Naive thymus-derived CD4-positive, alpha-beta T cell (primary cell): ENCODE measurements at regions of chr10 and their contacts with region 1.

Region 1: GRCh38 chr10:100185364-100186252 is at the start of gene ERLIN1:
- DNase-seq: peak; percentile 86 to 97 (median 91)
- ATAC-seq: peak; percentile 96
- H3K4me3 ChIP-seq: peak within 1 kb of the TSS; percentile 96
- H3K4me3 Mint-ChIP-seq: peak within 1 kb of the TSS; percentile 93 to 100 (median 96)
- H3K27ac ChIP-seq: peak within 1 kb of the TSS; percentile 84
- H3K27ac Mint-ChIP-seq: peak within 1 kb of the TSS; percentile 89 to 97 (median 95)
- H3K4me1 ChIP-seq: peaks cover 15 to 17% of the 10 kb centered on the region in 2 donors
- H3K4me1 Mint-ChIP-seq: peaks cover 40 to 79% (median 62%) of the 10 kb centered on the region in 7 donors
- H3K27me3 ChIP-seq: no peaks in the 10 kb centered on the region
- H3K27me3 Mint-ChIP-seq: no peaks in the 10 kb centered on the region
- total RNA-seq, gene ERLIN1: 3.9 to 17.0 (median 12.4) TPM

Region 2: DNA sequence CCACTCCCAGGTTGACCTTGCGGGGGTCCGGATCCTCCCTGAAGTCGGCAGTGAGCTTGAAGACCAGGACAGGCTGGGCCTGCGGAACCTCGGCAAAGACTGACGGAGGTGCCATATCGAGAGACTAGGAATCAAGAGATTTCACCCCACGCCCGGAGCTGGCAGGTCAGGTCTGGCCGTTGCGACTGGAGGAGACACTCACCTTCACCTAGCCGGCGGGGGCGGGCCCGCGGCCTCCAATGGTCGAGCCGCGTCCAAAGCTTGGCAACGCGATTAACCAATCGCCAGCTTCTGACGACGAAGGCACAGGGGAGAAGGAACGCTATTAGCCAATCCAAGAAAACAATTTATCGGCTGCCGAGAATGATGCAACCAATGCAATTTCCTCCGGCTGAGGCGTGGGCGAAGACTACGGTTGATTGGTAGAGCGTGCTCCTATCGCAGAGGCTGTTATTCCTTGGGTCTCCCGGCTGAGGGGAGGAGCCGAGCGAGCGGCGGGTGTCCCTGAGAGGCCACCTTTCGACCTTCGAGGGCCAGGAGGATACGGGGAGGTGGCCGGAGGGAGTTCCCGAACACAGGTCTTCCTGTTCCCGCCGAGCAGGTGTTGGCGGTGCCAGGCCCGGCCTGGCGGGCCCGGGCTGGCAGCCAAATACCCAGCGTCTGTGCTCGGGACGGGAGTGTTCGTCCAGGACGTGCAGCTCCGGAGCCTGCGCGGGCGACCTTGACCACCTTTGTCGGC is 755.0 kb before region 1 on chr10 and contains the start of gene GOT1:
- CTCF ChIA-PET with region 1: no interaction called
- POLR2A ChIA-PET with region 1: no interaction called
- intact Hi-C with region 1: loop called in 1 of 2 experiments (anchors 2 kb)
- DNase-seq: peak; percentile 72 to 95 (median 94)
- ATAC-seq: peak; percentile 97
- H3K4me3 ChIP-seq: peak within 1 kb of the TSS; percentile 81
- H3K4me3 Mint-ChIP-seq: peak within 1 kb of the TSS; percentile 94 to 100 (median 98)
- H3K27ac ChIP-seq: peak within 1 kb of the TSS; percentile 90
- H3K27ac Mint-ChIP-seq: peak within 1 kb of the TSS; percentile 88 to 97 (median 94)
- H3K4me1 ChIP-seq: peaks cover 5 to 9% of the 10 kb centered on the region in 2 donors
- H3K4me1 Mint-ChIP-seq: peaks cover 19 to 53% (median 44%) of the 10 kb centered on the region in 7 donors
- H3K27me3 ChIP-seq: no peaks in the 10 kb centered on the region
- H3K27me3 Mint-ChIP-seq: no peaks in the 10 kb centered on the region
- total RNA-seq, gene GOT1: 8.0 to 22.2 (median 10.2) TPM

Region 3: GRCh38 chr10:99732033-99732912 is 453.3 kb before region 1 on chr10 and contains the starts of genes COX15 and CUTC:
- CTCF ChIA-PET with region 1: no interaction called
- POLR2A ChIA-PET with region 1: no interaction called
- intact Hi-C with region 1: loop called in 1 of 2 experiments (anchors 5 kb)
- DNase-seq: peak; percentile 89 to 95 (median 94)
- ATAC-seq: peak; percentile 95
- H3K4me3 ChIP-seq: peak within 1 kb of the TSS; percentile 94
- H3K4me3 Mint-ChIP-seq: peak within 1 kb of the TSS; percentile 95 to 100 (median 98)
- H3K27ac ChIP-seq: peak within 1 kb of the TSS; percentile 83
- H3K27ac Mint-ChIP-seq: peak within 1 kb of the TSS; percentile 98 to 100 (median 99)
- H3K4me1 ChIP-seq: peaks cover 11 to 19% of the 10 kb centered on the region in 2 donors
- H3K4me1 Mint-ChIP-seq: peaks cover 28 to 79% (median 52%) of the 10 kb centered on the region in 7 donors
- H3K27me3 ChIP-seq: no peaks in the 10 kb centered on the region
- H3K27me3 Mint-ChIP-seq: no peaks in the 10 kb centered on the region
- total RNA-seq, gene COX15: 17.6 to 43.5 (median 32.9) TPM
- total RNA-seq, gene CUTC: 19.3 to 37.1 (median 25.0) TPM

Region 4: GRCh38 chr10:100009793-100010676 is 175.6 kb before region 1 on chr10 and contains the start of gene DNMBP:
- CTCF ChIA-PET with region 1: no interaction called
- POLR2A ChIA-PET with region 1: no interaction called
- intact Hi-C with region 1: loop called in 1 of 2 experiments (anchors 10 kb)
- DNase-seq: peak; percentile 61 to 87 (median 79)
- ATAC-seq: peak; percentile 95
- H3K4me3 ChIP-seq: peak within 1 kb of the TSS; percentile 69
- H3K4me3 Mint-ChIP-seq: peak within 1 kb of the TSS; percentile 85 to 98 (median 96)
- H3K27ac ChIP-seq: peak within 1 kb of the TSS; percentile 50
- H3K27ac Mint-ChIP-seq: peak within 1 kb of the TSS; percentile 40 to 96 (median 82)
- H3K4me1 ChIP-seq: peaks cover 10 to 12% of the 10 kb centered on the region in 2 donors
- H3K4me1 Mint-ChIP-seq: peaks cover 8 to 51% (median 40%) of the 10 kb centered on the region in 7 donors
- H3K27me3 ChIP-seq: no peaks in the 10 kb centered on the region
- H3K27me3 Mint-ChIP-seq: peaks cover 0 to 35% (median 0%) of the 10 kb centered on the region in 5 donors
- total RNA-seq, gene DNMBP: 2.8 to 8.5 (median 4.4) TPM

Region 5: GRCh38 chr10:100229819-100230422 is 44.3 kb after region 1 on chr10:
- CTCF ChIA-PET with region 1: no interaction called
- POLR2A ChIA-PET with region 1: interaction called, 4 read pairs
- intact Hi-C with region 1: loop called (anchors 1 kb)
- DNase-seq: no peak
- ATAC-seq: no peak
- H3K4me3 ChIP-seq: peak overlapping the region; percentile 99
- H3K4me3 Mint-ChIP-seq: peak overlapping the region; percentile 85 to 98 (median 91)
- H3K27ac ChIP-seq: peak overlapping the region; percentile 83
- H3K27ac Mint-ChIP-seq: peak overlapping the region; percentile 75 to 97 (median 85)
- H3K4me1 ChIP-seq: peaks cover 0 to 8% of the 10 kb centered on the region in 2 donors
- H3K4me1 Mint-ChIP-seq: peaks cover 16 to 44% (median 36%) of the 10 kb centered on the region in 7 donors
- H3K27me3 ChIP-seq: no peaks in the 10 kb centered on the region
- H3K27me3 Mint-ChIP-seq: no peaks in the 10 kb centered on the region

Region 6: DNA sequence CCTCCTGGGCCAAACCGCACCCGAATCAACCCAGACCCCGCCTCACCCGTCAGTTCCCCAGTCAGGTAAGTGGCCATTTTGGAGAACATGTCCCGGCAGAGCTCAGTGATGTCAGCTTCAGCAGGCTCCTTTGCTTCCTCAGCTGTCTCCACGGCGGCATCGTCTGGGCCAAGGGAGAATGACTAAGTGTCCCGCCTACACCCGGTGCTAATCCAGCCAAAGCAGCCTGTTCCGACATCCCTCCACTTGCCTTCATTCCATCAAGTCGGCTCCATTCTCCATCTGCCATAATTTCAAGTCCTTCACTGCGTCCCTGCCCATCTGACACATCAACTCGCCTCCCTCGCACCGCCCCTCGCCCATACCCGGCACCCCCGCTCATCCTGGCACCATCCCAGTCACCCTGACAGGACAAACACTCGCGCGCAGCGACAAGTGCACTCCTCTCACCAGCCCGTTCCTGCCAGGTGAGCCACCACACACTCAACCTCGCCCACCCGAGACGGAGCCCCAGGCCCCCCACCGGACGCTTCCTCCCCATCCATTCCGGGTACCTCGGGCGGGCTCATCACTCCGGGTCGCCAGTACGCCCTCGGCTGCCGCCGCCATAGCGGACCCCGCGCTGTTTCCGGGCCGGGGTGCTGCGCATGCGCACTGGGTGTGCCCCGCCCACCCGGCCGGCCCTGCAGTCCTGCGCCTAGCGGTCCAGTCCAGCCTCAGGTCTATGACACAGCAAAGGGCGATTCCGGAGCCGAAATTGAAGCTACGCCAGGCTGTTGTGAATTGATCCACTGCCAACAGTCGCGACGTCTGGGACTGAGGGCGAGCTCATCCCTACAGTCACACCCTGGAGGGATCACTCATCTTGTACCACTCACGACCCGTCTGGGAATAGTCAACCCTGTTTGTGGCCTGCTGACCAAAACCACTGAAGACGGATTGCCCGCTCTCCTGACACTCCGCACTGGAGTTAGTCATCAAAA is 100.7 kb after region 1 on chr10 and contains the start of gene BLOC1S2:
- CTCF ChIA-PET with region 1: no interaction called
- POLR2A ChIA-PET with region 1: no interaction called
- intact Hi-C with region 1: loop called (anchors 1 kb)
- DNase-seq: peak; percentile 71 to 97 (median 86)
- ATAC-seq: peak; percentile 92
- H3K4me3 ChIP-seq: peak within 1 kb of the TSS; percentile 99
- H3K4me3 Mint-ChIP-seq: peak within 1 kb of the TSS; percentile 95 to 100 (median 100)
- H3K27ac ChIP-seq: peak within 1 kb of the TSS; percentile 86
- H3K27ac Mint-ChIP-seq: peak within 1 kb of the TSS; percentile 94 to 100 (median 99)
- H3K4me1 ChIP-seq: peaks cover 10 to 17% of the 10 kb centered on the region in 2 donors
- H3K4me1 Mint-ChIP-seq: peaks cover 14 to 32% (median 26%) of the 10 kb centered on the region in 7 donors
- H3K27me3 ChIP-seq: no peaks in the 10 kb centered on the region
- H3K27me3 Mint-ChIP-seq: no peaks in the 10 kb centered on the region
- total RNA-seq, gene BLOC1S2: 31.5 to 51.3 (median 39.9) TPM

Region 7: DNA sequence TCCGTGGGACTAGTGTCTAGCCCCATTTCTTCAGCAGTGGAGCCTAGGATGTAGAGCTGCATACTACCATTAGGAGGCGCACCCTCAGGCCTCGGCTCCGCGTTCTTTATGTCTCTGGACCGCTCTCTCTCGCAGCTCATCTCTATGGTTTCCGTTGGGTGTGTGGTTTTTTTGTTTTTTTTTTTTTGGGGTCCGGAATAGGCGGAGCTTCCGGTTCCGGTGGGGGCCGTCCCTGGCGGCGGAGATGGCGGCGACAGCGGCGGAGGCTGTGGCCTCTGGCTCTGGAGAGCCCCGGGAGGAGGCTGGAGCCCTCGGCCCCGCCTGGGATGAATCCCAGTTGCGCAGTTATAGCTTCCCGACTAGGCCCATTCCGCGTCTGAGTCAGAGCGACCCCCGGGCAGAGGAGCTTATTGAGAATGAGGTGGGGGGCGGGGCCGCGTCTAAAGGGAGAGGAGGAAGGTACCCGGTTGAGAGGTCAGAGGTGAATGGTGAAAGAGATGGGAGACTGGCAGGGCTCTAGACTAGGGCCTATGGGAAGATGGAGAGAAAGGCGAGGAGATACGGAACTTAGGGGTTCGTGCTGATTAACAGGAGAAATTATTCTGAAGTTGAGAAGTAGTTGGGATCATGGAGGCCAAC is 350.2 kb after region 1 on chr10 and contains the start of gene HIF1AN:
- CTCF ChIA-PET with region 1: no interaction called
- POLR2A ChIA-PET with region 1: no interaction called
- intact Hi-C with region 1: loop called in 1 of 2 experiments (anchors 1 kb)
- DNase-seq: peak; percentile 70 to 95 (median 91)
- ATAC-seq: peak; percentile 100
- H3K4me3 ChIP-seq: peak within 1 kb of the TSS; percentile 73
- H3K4me3 Mint-ChIP-seq: peak within 1 kb of the TSS in 1 of 10 donors; percentile 9
- H3K27ac ChIP-seq: peak within 1 kb of the TSS; percentile 85
- H3K27ac Mint-ChIP-seq: peak within 1 kb of the TSS in 1 of 9 donors; percentile 57
- H3K4me1 ChIP-seq: peaks cover 24 to 27% of the 10 kb centered on the region in 2 donors
- H3K4me1 Mint-ChIP-seq: peaks cover 0 to 29% (median 10%) of the 10 kb centered on the region in 7 donors
- H3K27me3 ChIP-seq: no peaks in the 10 kb centered on the region
- H3K27me3 Mint-ChIP-seq: no peaks in the 10 kb centered on the region
- total RNA-seq, gene HIF1AN: 43.3 to 74.9 (median 54.8) TPM

Region 8: DNA sequence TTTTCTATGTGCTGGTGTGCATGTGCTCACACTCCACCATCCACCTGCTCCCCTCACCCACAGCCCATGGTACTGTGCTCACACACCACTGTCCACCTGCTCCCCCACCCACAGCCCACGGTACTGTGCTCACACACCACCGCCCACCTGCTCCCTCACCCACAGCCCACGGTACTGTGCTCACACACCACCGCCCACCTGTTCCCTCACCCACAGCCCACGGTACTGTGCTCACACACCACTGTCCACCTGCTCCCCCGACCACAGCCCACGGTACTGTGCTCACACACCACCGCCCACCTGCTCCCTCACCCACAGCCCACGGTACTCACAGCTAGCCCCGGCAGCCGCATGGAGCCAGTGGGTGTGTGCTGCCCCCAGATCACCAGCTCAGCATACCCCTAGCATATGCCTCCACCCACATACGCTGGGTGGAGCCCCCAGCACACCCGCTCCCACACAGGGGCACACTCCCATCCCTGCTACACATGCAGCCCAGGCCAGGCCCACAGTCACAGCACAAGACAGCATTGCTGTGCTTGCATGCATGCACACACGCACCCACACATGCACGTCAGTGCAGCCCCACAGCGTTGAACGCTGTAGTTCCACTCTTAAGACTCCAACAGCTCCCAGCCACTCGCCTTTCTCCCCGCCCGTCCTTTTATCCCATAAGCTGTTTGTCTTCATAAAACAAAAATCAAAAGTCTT is 621.8 kb after region 1 on chr10:
- CTCF ChIA-PET with region 1: no interaction called
- POLR2A ChIA-PET with region 1: no interaction called
- intact Hi-C with region 1: no loop called
- DNase-seq: no peak
- ATAC-seq: no peak
- H3K4me3 ChIP-seq: no peak overlapping the region
- H3K4me3 Mint-ChIP-seq: no peak overlapping the region
- H3K27ac ChIP-seq: no peak overlapping the region
- H3K27ac Mint-ChIP-seq: no peak overlapping the region
- H3K4me1 ChIP-seq: no peaks in the 10 kb centered on the region
- H3K4me1 Mint-ChIP-seq: no peaks in the 10 kb centered on the region
- H3K27me3 ChIP-seq: no peaks in the 10 kb centered on the region
- H3K27me3 Mint-ChIP-seq: peaks cover 44 to 77% (median 75%) of the 10 kb centered on the region in 5 donors

Region 9: DNA sequence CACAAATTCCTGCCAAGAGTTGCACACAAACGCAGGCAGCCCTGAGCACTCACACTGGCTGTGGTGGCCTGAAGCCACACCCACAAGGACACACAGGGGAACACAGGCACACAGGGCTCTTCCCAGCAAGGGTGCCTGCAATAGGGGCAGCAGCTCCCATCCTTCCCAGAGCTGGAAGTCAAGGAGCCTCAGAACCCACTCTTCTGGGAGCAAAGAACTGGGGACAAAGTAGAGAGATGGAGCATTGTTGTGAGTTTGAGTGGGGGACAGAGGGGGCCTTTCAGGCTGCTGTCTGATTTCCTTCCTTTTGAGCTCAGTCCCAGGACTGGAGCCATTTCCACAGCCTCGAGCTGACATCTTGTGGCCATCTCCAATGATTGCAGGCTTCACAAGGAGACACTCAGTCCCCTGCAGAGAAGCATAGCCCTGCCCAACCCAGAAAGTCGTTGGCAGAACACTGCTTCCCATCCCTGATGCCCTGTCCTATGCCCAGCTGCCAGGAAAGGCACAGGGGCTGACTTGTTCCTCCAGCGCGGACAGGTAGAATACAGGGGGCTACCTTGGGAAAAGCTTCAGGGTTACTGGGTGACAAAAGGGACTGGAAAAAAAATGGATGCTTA is 692.8 kb after region 1 on chr10:
- CTCF ChIA-PET with region 1: no interaction called
- POLR2A ChIA-PET with region 1: no interaction called
- intact Hi-C with region 1: no loop called
- DNase-seq: peak in 2 of 9 donors; percentile 7 to 26
- ATAC-seq: no peak
- H3K4me3 ChIP-seq: no peak overlapping the region
- H3K4me3 Mint-ChIP-seq: no peak overlapping the region
- H3K27ac ChIP-seq: no peak overlapping the region
- H3K27ac Mint-ChIP-seq: peak overlapping the region in 1 of 9 donors; percentile 56
- H3K4me1 ChIP-seq: no peaks in the 10 kb centered on the region
- H3K4me1 Mint-ChIP-seq: peaks cover 0 to 6% (median 0%) of the 10 kb centered on the region in 7 donors
- H3K27me3 ChIP-seq: no peaks in the 10 kb centered on the region
- H3K27me3 Mint-ChIP-seq: peaks cover 0 to 23% (median 9%) of the 10 kb centered on the region in 5 donors